T-cell (primary cell): ENCODE measurements at regions of chr17 and their contacts with region 1.

Region 1: GRCh38 chr17:1997927-1998784 is 27.0 kb downstream of the RTN4RL1 start:
- DNase-seq: peak in 2 of 35 experiments; percentile 4 to 14
- ATAC-seq: peak in 3 of 4 experiments; percentile 23 to 58 (median 32)
- H3K4me3 ChIP-seq: peak overlapping the region in 1 of 2 donors; percentile 5
- H3K4me3 Mint-ChIP-seq: no peak overlapping the region
- H3K27ac ChIP-seq: no peak overlapping the region
- H3K27ac Mint-ChIP-seq: no peak overlapping the region
- H3K4me1 ChIP-seq: peaks cover 0 to 6% of the 10 kb centered on the region in 2 experiments
- H3K4me1 Mint-ChIP-seq: peaks cover 0 to 9% (median 0%) of the 10 kb centered on the region in 3 donors
- H3K27me3 ChIP-seq: peaks cover 0 to 65% of the 10 kb centered on the region in 2 experiments
- H3K27me3 Mint-ChIP-seq: peaks cover 12 to 37% of the 10 kb centered on the region in 2 donors

Region 2: GRCh38 chr17:2156666-2157065 is 158.5 kb after region 1 on chr17:
- CTCF ChIA-PET with region 1: no interaction called
- POLR2A ChIA-PET with region 1: interaction called in 1 of 2 experiments, 10 read pairs
- DNase-seq: no peak
- ATAC-seq: no peak
- H3K4me3 ChIP-seq: no peak overlapping the region
- H3K4me3 Mint-ChIP-seq: no peak overlapping the region
- H3K27ac ChIP-seq: no peak overlapping the region
- H3K27ac Mint-ChIP-seq: no peak overlapping the region
- H3K4me1 ChIP-seq: peaks cover 0 to 10% of the 10 kb centered on the region in 2 experiments
- H3K4me1 Mint-ChIP-seq: peaks cover 5 to 10% (median 5%) of the 10 kb centered on the region in 3 donors
- H3K27me3 ChIP-seq: no peaks in the 10 kb centered on the region
- H3K27me3 Mint-ChIP-seq: no peaks in the 10 kb centered on the region